GM18951 (cell line): ENCODE measurements at regions of chr12 and their contacts with region 1.

Region 1: GRCh38 chr12:114684098-114684869 is at the start of gene TBX3:
- POLR2A ChIP-seq: no peak

Region 2: DNA sequence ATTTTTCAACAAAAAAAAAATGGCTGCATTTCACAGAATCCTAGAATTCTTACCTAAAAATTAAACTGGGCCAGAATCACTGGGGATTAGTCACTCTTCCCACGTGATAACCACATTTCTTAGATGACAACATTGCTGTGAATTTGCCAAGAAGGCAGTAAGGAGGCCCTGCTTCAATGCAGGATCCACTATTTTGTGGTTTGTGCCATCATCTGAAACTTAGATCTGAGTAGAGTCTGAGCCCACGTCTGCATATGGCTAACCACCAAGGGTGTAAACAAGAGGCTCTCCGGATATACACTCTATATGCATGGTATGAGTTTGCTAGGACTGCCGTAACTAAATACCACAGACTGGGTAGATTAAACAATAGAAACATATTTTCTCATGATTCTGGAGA is 254.0 kb before region 1 on chr12:
- in situ Hi-C with region 1: loop called (anchors 25 kb)
- POLR2A ChIP-seq: no peak